ENCODE measurements at regions of chr5 and their contacts with region 1.

Region 1: GRCh38 chr5:121841892-121842291 is 9.8 kb upstream of the FTMT start:
- DNase-seq: no peak
- H3K4me3 ChIP-seq: no peak overlapping the region
- H3K27ac ChIP-seq: no peak overlapping the region
- H3K4me1 ChIP-seq: no peaks in the 10 kb centered on the region
- H3K27me3 ChIP-seq: no peaks in the 10 kb centered on the region
- CTCF ChIP-seq: no peak
- POLR2A ChIP-seq: no peak

Region 2: GRCh38 chr5:120576588-120576987 is 1265.3 kb before region 1 on chr5:
- intact Hi-C with region 1: loop called (anchors 5 kb)
- DNase-seq: no peak
- H3K4me3 ChIP-seq: no peak overlapping the region
- H3K27ac ChIP-seq: no peak overlapping the region
- H3K4me1 ChIP-seq: no peaks in the 10 kb centered on the region
- H3K27me3 ChIP-seq: no peaks in the 10 kb centered on the region
- CTCF ChIP-seq: no peak
- POLR2A ChIP-seq: no peak